Transverse colon (tissue), 4 donors: ENCODE measurements at regions of chr7 and their contacts with region 1.

Region 1: DNA sequence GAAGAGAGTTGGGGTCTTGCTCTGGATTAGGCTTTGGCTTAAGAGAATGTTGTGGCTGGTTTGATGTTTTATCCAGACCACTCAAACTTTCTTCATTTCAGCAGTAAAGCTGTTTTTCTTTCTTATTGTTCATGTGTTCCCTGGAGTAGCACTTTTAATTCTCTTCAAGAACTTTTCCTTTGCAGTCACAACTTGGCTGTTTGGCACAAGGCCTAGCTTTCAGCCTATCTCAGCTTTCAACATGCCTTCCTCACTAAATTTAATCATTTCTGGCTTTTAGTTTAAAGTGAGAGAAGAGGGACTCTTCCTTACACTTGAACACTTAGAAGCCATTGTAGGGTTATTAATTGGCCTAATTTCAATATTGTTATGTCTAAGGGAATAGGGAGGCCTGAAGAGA is 18.1 kb downstream of the CCDC126 start:
- DNase-seq: no peak
- H3K4me3 ChIP-seq: no peak overlapping the region
- H3K27ac ChIP-seq: no peak overlapping the region
- H3K4me1 ChIP-seq: no peaks in the 10 kb centered on the region
- H3K27me3 ChIP-seq: no peaks in the 10 kb centered on the region
- CTCF ChIP-seq: no peak
- EP300 ChIP-seq: no peak
- POLR2A ChIP-seq: no peak

Region 2: DNA sequence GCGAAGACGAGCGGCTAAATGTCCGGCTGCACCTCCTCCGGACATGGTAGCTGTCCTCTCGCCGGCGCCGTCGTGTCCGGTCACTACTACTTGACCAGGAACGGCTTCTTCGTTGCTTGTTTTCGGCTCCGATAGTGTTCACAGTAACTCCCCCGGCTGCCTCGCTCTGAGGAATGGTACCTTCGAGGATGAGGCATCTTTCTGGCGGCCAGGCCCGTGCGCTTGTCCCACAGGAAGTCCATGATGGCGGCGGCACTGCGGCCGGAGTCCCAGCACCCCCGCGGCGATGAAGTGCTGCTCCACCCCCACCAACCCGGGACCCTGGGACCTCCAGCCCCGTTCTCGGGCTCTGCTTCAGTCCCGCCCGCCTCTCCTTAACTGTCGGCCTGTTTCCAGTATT is 29.2 kb before region 1 on chr7:
- in situ Hi-C with region 1: no loop called
- intact Hi-C with region 1: loop called (anchors 1 kb)
- DNase-seq: no peak
- H3K4me3 ChIP-seq: no peak overlapping the region
- H3K27ac ChIP-seq: no peak overlapping the region
- H3K4me1 ChIP-seq: no peaks in the 10 kb centered on the region
- H3K27me3 ChIP-seq: no peaks in the 10 kb centered on the region
- CTCF ChIP-seq: no peak
- EP300 ChIP-seq: no peak
- POLR2A ChIP-seq: no peak